Naive thymus-derived CD4-positive, alpha-beta T cell (primary cell): ENCODE measurements at regions of chr6 and their contacts with region 1.

Region 1: GRCh38 chr6:79777713-79778579 is 146.8 kb downstream of the SH3BGRL2 start:
- DNase-seq: peak; percentile 68 to 94 (median 79)
- ATAC-seq: peak; percentile 96
- H3K4me3 ChIP-seq: peak overlapping the region; percentile 60
- H3K4me3 Mint-ChIP-seq: peak overlapping the region; percentile 68 to 83 (median 80)
- H3K27ac ChIP-seq: no peak overlapping the region
- H3K27ac Mint-ChIP-seq: peak overlapping the region in 6 of 9 donors; percentile 0 to 80 (median 44)
- H3K4me1 ChIP-seq: peaks cover 0 to 6% of the 10 kb centered on the region in 2 donors
- H3K4me1 Mint-ChIP-seq: peaks cover 7 to 9% (median 7%) of the 10 kb centered on the region in 7 donors
- H3K27me3 ChIP-seq: no peaks in the 10 kb centered on the region
- H3K27me3 Mint-ChIP-seq: peaks cover 0 to 4% (median 0%) of the 10 kb centered on the region in 5 donors

Region 2: DNA sequence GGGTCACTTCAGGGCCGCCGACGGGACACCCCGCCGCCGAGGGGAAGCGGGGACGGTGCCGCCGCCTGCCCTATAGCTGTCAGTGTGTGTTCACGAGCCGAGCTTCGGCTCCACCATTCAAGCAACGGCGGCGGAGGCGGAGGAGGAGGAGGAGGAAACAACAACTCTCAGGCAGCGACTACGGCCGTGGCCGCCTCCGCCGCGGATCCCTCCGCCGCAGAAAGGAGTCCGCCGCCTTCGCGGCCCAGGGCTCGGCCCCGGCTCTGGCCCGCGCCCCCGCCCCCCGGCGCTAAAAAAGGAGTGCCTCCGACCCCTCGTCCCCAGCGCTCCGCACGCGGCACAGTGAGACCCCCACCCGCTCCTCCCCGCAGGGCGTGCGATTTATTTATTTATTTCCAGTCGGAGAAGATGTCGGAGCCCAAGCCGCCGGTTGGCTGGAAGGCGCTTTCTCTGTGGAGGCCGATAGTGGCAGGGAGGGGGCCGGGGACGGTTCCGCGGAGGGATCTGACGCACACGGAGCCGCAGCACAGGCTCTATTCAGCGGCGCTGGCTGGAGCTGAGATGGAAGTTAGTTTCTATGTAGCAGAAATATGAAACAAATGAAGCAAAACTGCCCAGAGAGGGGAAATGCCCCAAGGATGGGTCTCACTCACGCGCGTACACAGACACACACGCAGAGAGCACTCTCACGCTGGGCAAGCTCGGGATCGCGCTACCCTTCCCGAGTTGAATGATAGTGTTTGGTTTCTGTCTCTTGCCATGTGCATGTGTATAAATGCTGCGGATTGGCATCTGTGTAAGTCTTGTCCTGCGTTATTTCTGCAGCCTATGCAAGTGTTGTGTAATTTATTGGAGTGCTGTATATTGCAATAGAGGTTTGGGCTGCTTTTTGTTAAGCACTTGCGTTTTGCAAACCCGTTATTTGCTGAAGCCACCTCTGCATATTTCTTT is 699.6 kb before region 1 on chr6 and contains the start of gene PHIP:
- CTCF ChIA-PET with region 1: no interaction called
- POLR2A ChIA-PET with region 1: no interaction called
- intact Hi-C with region 1: loop called in 1 of 2 experiments (anchors 10 kb)
- DNase-seq: peak; percentile 89 to 97 (median 94)
- ATAC-seq: peak; percentile 90
- H3K4me3 ChIP-seq: peak within 1 kb of the TSS; percentile 83
- H3K4me3 Mint-ChIP-seq: peak within 1 kb of the TSS; percentile 92 to 98 (median 94)
- H3K27ac ChIP-seq: peak within 1 kb of the TSS; percentile 98
- H3K27ac Mint-ChIP-seq: peak within 1 kb of the TSS; percentile 93 to 98 (median 95)
- H3K4me1 ChIP-seq: peaks cover 19 to 21% of the 10 kb centered on the region in 2 donors
- H3K4me1 Mint-ChIP-seq: peaks cover 19 to 46% (median 41%) of the 10 kb centered on the region in 7 donors
- H3K27me3 ChIP-seq: no peaks in the 10 kb centered on the region
- H3K27me3 Mint-ChIP-seq: peaks cover 4 to 23% (median 15%) of the 10 kb centered on the region in 5 donors
- total RNA-seq, gene PHIP: 34.0 to 46.8 (median 41.6) TPM

Region 3: GRCh38 chr6:79536954-79537747 is 240.8 kb before region 1 on chr6 and contains the start of gene LCA5:
- CTCF ChIA-PET with region 1: no interaction called
- POLR2A ChIA-PET with region 1: no interaction called
- intact Hi-C with region 1: loop called in 1 of 2 experiments (anchors 1 kb)
- DNase-seq: peak; percentile 65 to 93 (median 89)
- ATAC-seq: peak; percentile 99
- H3K4me3 ChIP-seq: peak within 1 kb of the TSS; percentile 72
- H3K4me3 Mint-ChIP-seq: no peak within 1 kb of the TSS
- H3K27ac ChIP-seq: peak within 1 kb of the TSS; percentile 50
- H3K27ac Mint-ChIP-seq: no peak within 1 kb of the TSS
- H3K4me1 ChIP-seq: peaks cover 4 to 6% of the 10 kb centered on the region in 2 donors
- H3K4me1 Mint-ChIP-seq: peaks cover 0 to 7% (median 0%) of the 10 kb centered on the region in 7 donors
- H3K27me3 ChIP-seq: peaks cover 0 to 4% of the 10 kb centered on the region in 2 donors
- H3K27me3 Mint-ChIP-seq: peaks cover 0 to 20% (median 6%) of the 10 kb centered on the region in 5 donors
- total RNA-seq, gene LCA5: 0.10 to 0.65 (median 0.24) TPM

Region 4: GRCh38 chr6:79646006-79646405 is 131.9 kb before region 1 on chr6:
- CTCF ChIA-PET with region 1: no interaction called
- POLR2A ChIA-PET with region 1: no interaction called
- intact Hi-C with region 1: loop called in 1 of 2 experiments (anchors 1 kb)
- DNase-seq: peak in 5 of 9 donors; percentile 31 to 50 (median 42)
- ATAC-seq: peak; percentile 70
- H3K4me3 ChIP-seq: no peak overlapping the region
- H3K4me3 Mint-ChIP-seq: peak overlapping the region in 1 of 10 donors; percentile 36
- H3K27ac ChIP-seq: no peak overlapping the region
- H3K27ac Mint-ChIP-seq: peak overlapping the region in 1 of 9 donors; percentile 41
- H3K4me1 ChIP-seq: no peaks in the 10 kb centered on the region
- H3K4me1 Mint-ChIP-seq: peaks cover 0 to 35% (median 15%) of the 10 kb centered on the region in 7 donors
- H3K27me3 ChIP-seq: no peaks in the 10 kb centered on the region
- H3K27me3 Mint-ChIP-seq: peaks cover 5 to 16% (median 10%) of the 10 kb centered on the region in 5 donors

Region 5: DNA sequence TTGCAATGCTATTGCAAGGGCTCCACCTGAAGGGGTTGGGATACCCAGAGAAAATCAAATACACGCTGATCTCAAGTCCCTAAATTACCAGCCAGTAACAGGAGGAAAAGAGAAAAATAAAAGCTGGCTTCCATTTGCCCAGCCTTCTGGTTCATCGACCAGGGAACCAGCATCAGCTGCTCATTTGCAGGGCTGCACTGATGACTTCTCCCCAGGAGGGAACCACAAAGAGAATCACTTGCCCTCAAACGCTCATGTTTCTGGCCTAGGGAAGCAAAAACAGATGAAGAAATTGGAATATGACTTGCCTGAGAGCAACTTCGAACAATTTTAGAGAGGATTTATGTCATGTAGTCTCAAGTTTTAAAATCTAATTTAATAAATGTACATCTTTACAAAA is 27.1 kb before region 1 on chr6:
- CTCF ChIA-PET with region 1: no interaction called
- POLR2A ChIA-PET with region 1: no interaction called
- intact Hi-C with region 1: no loop called
- DNase-seq: no peak
- ATAC-seq: no peak
- H3K4me3 ChIP-seq: no peak overlapping the region
- H3K4me3 Mint-ChIP-seq: no peak overlapping the region
- H3K27ac ChIP-seq: no peak overlapping the region
- H3K27ac Mint-ChIP-seq: no peak overlapping the region
- H3K4me1 ChIP-seq: no peaks in the 10 kb centered on the region
- H3K4me1 Mint-ChIP-seq: no peaks in the 10 kb centered on the region
- H3K27me3 ChIP-seq: no peaks in the 10 kb centered on the region
- H3K27me3 Mint-ChIP-seq: peaks cover 19 to 50% (median 22%) of the 10 kb centered on the region in 5 donors

Region 6: GRCh38 chr6:79869600-79870084 is 91.7 kb after region 1 on chr6:
- CTCF ChIA-PET with region 1: interaction called, 4 read pairs
- POLR2A ChIA-PET with region 1: no interaction called
- intact Hi-C with region 1: loop called (anchors 1 kb)
- DNase-seq: peak; percentile 57 to 79 (median 71)
- ATAC-seq: peak; percentile 98
- H3K4me3 ChIP-seq: no peak overlapping the region
- H3K4me3 Mint-ChIP-seq: peak overlapping the region; percentile 40 to 77 (median 68)
- H3K27ac ChIP-seq: no peak overlapping the region
- H3K27ac Mint-ChIP-seq: peak overlapping the region in 3 of 9 donors; percentile 53 to 56 (median 56)
- H3K4me1 ChIP-seq: no peaks in the 10 kb centered on the region
- H3K4me1 Mint-ChIP-seq: peaks cover 7 to 20% (median 10%) of the 10 kb centered on the region in 7 donors
- H3K27me3 ChIP-seq: no peaks in the 10 kb centered on the region
- H3K27me3 Mint-ChIP-seq: peaks cover 4 to 19% (median 4%) of the 10 kb centered on the region in 5 donors

Region 7: DNA sequence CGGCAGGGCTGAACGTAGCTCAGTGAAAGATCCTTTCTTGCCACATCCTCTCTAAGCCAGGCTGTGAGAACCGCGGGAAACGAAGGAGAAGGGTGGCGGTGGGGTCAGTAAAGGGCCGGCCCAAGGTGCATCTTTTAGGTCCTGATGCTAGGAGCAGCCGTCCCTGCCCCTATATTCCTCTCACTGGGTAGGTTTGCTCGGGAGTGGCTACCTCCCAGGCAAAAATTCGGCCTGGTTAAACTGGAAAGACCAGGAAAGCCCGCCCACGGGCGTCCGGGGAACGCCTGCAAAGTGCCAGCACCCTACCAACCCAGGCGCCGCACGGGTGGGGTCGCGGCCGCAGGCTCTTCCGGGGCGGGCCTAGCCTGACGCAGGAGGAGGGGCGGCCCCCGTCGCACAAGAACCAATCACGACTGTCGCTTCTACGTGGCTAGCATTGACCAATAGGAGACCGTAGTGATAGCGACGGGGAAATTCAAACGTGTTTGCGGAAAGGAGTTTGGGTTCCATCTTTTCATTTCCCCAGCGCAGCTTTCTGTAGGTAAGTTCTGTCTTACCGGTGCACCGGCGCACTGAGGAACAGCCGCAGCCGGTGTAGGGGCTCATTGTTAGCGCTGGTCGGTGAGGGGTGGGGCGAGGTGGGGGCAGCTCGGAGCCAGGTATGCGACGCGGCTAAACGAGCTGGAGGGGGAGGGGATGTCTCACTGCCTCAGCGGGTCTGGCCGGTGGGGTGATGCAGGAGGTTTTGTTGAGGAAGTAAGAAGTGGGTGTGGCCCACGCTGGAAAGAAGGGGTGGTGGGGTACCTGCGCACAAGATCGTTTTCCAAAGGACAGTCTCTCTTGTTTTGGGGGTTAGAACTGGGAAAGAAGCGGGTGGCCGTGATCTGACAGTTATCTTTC is 226.5 kb after region 1 on chr6 and contains the start of gene TTK:
- CTCF ChIA-PET with region 1: no interaction called
- POLR2A ChIA-PET with region 1: no interaction called
- intact Hi-C with region 1: loop called (anchors 2 kb)
- DNase-seq: peak; percentile 84 to 94 (median 91)
- ATAC-seq: peak; percentile 100
- H3K4me3 ChIP-seq: peak within 1 kb of the TSS; percentile 94
- H3K4me3 Mint-ChIP-seq: peak within 1 kb of the TSS; percentile 80 to 97 (median 90)
- H3K27ac ChIP-seq: peak within 1 kb of the TSS; percentile 80
- H3K27ac Mint-ChIP-seq: peak within 1 kb of the TSS; percentile 65 to 97 (median 94)
- H3K4me1 ChIP-seq: peaks cover 9 to 10% of the 10 kb centered on the region in 2 donors
- H3K4me1 Mint-ChIP-seq: peaks cover 2 to 41% (median 19%) of the 10 kb centered on the region in 7 donors
- H3K27me3 ChIP-seq: no peaks in the 10 kb centered on the region
- H3K27me3 Mint-ChIP-seq: peaks cover 0 to 5% (median 0%) of the 10 kb centered on the region in 5 donors
- total RNA-seq, gene TTK: 0.13 to 22.4 (median 0.81) TPM